ENCODE measurements at regions of chr3 and their contacts with region 1.

Region 1: DNA sequence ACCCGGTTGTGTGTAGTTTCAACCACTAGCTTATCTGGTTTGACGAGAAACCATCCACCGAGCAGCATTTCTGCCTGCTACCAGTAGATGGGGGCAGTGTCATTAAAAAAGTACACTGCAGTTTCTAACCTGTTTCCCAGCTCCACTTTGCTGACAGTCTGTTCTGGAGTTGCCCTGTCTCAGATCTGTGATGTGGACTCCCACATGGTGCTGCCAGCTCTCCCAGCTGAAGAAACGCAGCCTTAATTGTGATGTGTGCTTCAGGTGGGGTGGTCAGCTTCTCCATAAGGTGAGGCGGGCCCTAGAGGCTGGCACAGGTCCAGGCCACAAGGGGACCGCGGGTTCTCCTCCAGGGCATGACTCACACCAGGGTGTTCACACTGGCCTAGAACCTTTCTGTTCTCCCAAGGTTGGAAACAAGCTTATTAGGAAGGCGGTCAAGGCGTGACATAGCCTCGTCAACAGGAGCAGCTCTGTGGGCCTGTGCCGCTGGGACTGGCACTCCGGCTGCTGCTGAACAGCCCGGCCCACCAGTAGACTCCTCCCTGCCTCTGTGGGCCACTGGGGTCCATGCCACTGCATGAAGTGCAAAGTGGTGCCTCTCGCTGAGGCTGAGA is 2.9 kb upstream of the FAM43A start:
- DNase-seq: no peak
- H3K4me3 ChIP-seq: no peak overlapping the region
- H3K27me3 ChIP-seq: no peaks in the 10 kb centered on the region
- CTCF ChIP-seq: peak; percentile 87

Region 2: GRCh38 chr3:194671900-194672808 is 10.6 kb before region 1 on chr3 and contains the start of gene LSG1:
- CTCF ChIA-PET with region 1: interaction called, 97 read pairs
- POLR2A ChIA-PET with region 1: interaction called, 9 read pairs
- DNase-seq: peak; percentile 62
- H3K4me3 ChIP-seq: peak within 1 kb of the TSS; percentile 85
- H3K27me3 ChIP-seq: peaks cover 6% of the 10 kb centered on the region
- CTCF ChIP-seq: no peak
- polyA plus RNA-seq, gene LSG1: 23.9 and 35.4 TPM in 2 replicates

Region 3: GRCh38 chr3:195106418-195106906 is 423.7 kb after region 1 on chr3:
- CTCF ChIA-PET with region 1: interaction called, 43 read pairs
- POLR2A ChIA-PET with region 1: no interaction called
- DNase-seq: no peak
- H3K4me3 ChIP-seq: no peak overlapping the region
- H3K27me3 ChIP-seq: no peaks in the 10 kb centered on the region
- CTCF ChIP-seq: peak; percentile 88

Region 4: GRCh38 chr3:195187609-195188425 is 505.0 kb after region 1 on chr3:
- CTCF ChIA-PET with region 1: interaction called, 10 read pairs
- POLR2A ChIA-PET with region 1: no interaction called
- DNase-seq: peak; percentile 38
- H3K4me3 ChIP-seq: no peak overlapping the region
- H3K27me3 ChIP-seq: no peaks in the 10 kb centered on the region
- CTCF ChIP-seq: no peak

Region 5: DNA sequence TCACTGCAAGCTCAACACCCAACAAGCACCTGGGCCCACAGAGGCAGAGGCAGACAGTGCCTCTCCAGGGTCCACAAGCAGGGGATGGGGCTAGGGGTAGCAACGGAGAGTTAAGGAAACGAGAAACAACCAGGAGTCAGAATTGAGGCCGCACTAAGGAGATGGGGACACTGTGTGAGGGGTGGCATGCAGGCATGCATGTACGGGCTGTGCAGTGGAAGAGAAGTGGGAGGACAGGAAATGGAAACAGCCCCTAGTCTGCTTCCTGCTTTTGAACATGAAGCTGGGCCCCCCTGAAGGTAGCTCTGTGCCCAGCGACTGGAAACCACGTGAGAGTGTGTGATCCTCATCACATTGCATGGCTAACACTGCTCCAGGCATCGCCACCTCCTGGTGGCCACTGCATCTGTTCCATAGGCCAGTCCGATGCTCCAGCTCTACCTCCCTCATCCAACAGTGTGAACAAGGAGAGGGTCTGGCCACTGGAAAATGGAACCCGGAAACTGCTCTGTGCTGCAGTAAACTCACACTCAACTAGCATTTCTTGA is 544.2 kb after region 1 on chr3:
- CTCF ChIA-PET with region 1: interaction called, 10 read pairs
- POLR2A ChIA-PET with region 1: no interaction called
- DNase-seq: no peak
- H3K4me3 ChIP-seq: no peak overlapping the region
- H3K27me3 ChIP-seq: no peaks in the 10 kb centered on the region
- CTCF ChIP-seq: peak; percentile 44

Region 6: GRCh38 chr3:195250473-195251251 is 567.9 kb after region 1 on chr3:
- CTCF ChIA-PET with region 1: interaction called, 34 read pairs
- POLR2A ChIA-PET with region 1: interaction called, 18 read pairs
- DNase-seq: no peak
- H3K4me3 ChIP-seq: no peak overlapping the region
- H3K27me3 ChIP-seq: no peaks in the 10 kb centered on the region
- CTCF ChIP-seq: peak; percentile 49

Region 7: DNA sequence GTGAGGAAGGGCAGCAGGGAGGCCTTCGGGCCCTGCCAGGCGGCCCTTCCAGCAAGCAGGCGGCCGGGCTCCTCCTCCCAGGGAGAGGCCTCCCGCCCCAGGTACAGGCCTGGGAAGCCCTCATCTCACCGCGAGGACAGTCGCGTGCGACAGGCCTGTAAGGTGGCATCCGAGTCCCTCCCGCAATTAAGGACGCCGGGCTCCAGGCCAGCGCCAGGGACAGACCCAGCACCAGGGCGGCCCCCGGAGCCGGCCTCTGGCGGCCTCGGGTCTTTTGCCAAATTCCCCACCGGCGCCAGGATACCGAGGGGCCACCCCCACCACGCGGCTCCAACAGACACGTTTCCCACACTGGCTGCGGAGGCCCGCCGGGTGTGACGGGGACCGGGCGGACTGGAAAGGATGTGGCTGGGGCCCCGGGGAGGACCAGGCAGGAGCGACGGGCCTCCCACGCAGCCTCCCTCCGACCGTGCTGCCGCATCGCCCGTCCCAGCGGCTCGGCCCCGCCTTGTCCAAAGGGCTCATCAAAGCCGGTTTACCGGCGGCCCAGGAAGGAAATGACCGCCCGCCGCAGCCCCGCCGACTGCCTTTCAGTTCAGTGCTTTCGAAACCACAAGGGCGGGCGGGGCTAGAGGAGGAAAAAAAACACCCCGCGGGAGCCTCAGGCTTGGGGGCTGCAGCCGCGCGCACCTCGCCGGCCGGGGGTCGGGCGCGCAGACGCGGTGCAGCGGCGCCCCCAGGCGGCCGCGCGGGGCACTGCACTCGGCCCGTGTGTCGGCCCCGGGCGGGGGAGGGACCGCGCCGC is 576.9 kb after region 1 on chr3:
- CTCF ChIA-PET with region 1: interaction called, 47 read pairs
- POLR2A ChIA-PET with region 1: no interaction called
- DNase-seq: peak; percentile 62
- H3K4me3 ChIP-seq: peak overlapping the region; percentile 54
- H3K27me3 ChIP-seq: no peaks in the 10 kb centered on the region
- CTCF ChIP-seq: no peak